H1 (cell line): ENCODE measurements at regions of chr9 and their contacts with region 1.

Region 1: DNA sequence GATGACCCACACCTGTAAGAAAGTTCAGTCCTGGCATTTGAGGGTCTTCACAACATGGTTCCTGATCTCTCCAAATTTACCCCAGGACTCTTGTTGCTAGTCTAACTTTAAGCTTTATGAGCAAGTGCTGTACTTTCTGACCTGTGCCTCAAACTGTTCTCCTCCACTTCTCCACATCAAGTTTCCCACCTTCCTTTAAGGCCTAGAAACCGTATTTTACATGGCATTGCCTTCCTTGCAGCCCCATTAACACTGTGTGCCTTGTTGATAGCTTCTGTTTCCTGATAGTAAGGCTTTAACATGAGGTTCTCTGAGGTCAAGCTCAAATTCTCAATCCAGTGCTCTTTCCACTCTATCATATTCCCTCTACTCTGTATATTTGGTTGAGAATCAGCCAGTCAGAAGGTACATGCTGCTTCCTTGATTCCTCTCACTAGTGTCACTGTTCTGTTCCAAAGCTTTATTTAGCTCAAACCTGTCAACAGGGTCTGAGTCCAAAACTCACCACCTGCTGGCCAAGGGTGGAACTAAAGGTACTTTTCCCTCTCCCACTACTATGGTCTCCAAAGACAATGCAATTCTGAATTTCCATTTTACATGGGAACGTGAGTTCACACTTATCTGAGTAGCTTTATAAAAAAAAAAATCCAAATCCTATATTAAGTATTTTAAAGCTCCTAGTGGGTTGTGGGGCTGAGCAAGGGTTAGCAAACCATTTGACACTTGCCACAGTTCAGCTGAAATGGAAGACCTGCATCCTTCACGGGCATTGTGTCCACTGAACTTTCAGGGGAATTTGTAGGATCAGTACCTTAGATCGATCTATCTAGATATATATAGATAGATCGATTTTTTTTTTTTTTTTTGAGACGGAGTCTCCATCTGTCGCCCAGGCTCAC is 21.1 kb downstream of the VCP start:
- DNase-seq: peak in 1 of 2 experiments; percentile 84
- H3K4me3 ChIP-seq: no peak overlapping the region
- H3K27ac ChIP-seq: no peak overlapping the region
- H3K4me1 ChIP-seq: no peaks in the 10 kb centered on the region
- H3K27me3 ChIP-seq: no peaks in the 10 kb centered on the region
- CTCF ChIP-seq: peak in 2 of 3 experiments; percentile 63 to 78; a peak in 3 of 4 replicates
- EP300 ChIP-seq: no peak
- POLR2A ChIP-seq: no peak
- RAD21 ChIP-seq: peak; percentile 58 to 64

Region 2: DNA sequence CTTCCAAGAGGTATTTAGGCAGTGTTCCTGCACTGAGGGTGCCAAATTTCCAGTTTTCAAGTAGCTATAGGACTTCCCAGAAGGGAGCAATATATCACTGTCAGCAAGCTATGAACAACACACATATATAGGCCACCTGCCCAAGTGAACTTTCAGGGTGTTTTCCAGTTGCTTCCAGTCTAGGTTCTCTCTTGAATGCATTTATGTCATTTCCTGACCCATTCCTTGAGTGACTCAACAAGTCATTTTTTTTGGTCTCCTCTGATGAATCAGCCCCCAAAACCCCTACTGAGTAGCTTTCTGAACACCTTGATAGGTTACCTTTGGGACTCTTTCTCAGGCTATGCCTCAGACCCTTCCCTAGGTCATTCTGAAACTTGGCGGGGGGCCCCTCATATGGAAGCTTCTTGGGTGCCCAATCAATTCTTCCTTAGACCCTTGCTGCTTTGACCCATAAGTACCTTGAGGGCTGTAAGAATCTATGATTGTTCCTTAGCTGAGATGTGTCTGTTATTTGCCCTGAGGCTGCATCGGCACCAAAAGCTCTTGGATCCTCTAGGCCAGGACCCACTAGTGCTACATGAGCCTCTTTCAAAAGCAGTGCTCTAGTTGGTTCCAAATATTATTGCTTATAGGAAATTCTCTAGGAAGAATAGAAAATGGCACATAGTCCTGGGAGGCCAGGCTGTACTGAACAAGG is 49.4 kb before region 1 on chr9:
- CTCF ChIA-PET with region 1: interaction called, 17 read pairs
- POLR2A ChIA-PET with region 1: interaction called, 5 read pairs
- DNase-seq: no peak
- H3K4me3 ChIP-seq: no peak overlapping the region
- H3K27ac ChIP-seq: no peak overlapping the region
- H3K4me1 ChIP-seq: peaks cover 2 to 9% (median 4%) of the 10 kb centered on the region in 4 experiments; a peak in 2 of 7 replicates
- H3K27me3 ChIP-seq: no peaks in the 10 kb centered on the region
- CTCF ChIP-seq: no peak
- EP300 ChIP-seq: no peak
- POLR2A ChIP-seq: no peak
- RAD21 ChIP-seq: no peak

Region 3: GRCh38 chr9:35026671-35027070 is 24.6 kb before region 1 on chr9:
- CTCF ChIA-PET with region 1: interaction called, 14 read pairs
- POLR2A ChIA-PET with region 1: interaction called, 4 read pairs
- DNase-seq: no peak
- H3K4me3 ChIP-seq: no peak overlapping the region
- H3K27ac ChIP-seq: peak overlapping the region; percentile 44; the same call in 1 of the 2 replicates
- H3K4me1 ChIP-seq: peaks cover 0 to 10% (median 3%) of the 10 kb centered on the region in 4 experiments; a peak in 3 of 7 replicates
- H3K27me3 ChIP-seq: no peaks in the 10 kb centered on the region
- CTCF ChIP-seq: no peak
- EP300 ChIP-seq: no peak
- POLR2A ChIP-seq: no peak
- RAD21 ChIP-seq: no peak

Region 4: GRCh38 chr9:35116898-35117551 is 65.7 kb after region 1 on chr9:
- CTCF ChIA-PET with region 1: no interaction called
- POLR2A ChIA-PET with region 1: no interaction called
- DNase-seq: peak; percentile 83 to 87
- H3K4me3 ChIP-seq: peak overlapping the region; percentile 49 to 79 (median 65); a peak in 7 of 8 replicates
- H3K27ac ChIP-seq: no peak overlapping the region
- H3K4me1 ChIP-seq: peaks cover 4 to 19% (median 10%) of the 10 kb centered on the region in 4 experiments; a peak in 6 of 7 replicates
- H3K27me3 ChIP-seq: no peaks in the 10 kb centered on the region
- CTCF ChIP-seq: peak; percentile 90 to 98 (median 90)
- EP300 ChIP-seq: no peak
- POLR2A ChIP-seq: peak in 1 of 2 experiments; percentile 51; a peak in 1 of 3 replicates
- RAD21 ChIP-seq: peak; percentile 93 to 95